H1 (cell line): ENCODE measurements at regions of chr9 and their contacts with region 1.

Region 1: GRCh38 chr9:114662081-114662989 is 4.7 kb upstream of the TEX53 start:
- DNase-seq: peak in 1 of 2 experiments; percentile 89
- H3K4me3 ChIP-seq: no peak overlapping the region
- H3K27ac ChIP-seq: no peak overlapping the region
- H3K4me1 ChIP-seq: peaks cover 0 to 11% (median 6%) of the 10 kb centered on the region in 4 experiments; a peak in 4 of 7 replicates
- H3K27me3 ChIP-seq: no peaks in the 10 kb centered on the region
- CTCF ChIP-seq: peak; percentile 70 to 90 (median 90)
- EP300 ChIP-seq: no peak
- POLR2A ChIP-seq: no peak
- RAD21 ChIP-seq: peak; percentile 81 to 87

Region 2: GRCh38 chr9:114674798-114675540 is 12.6 kb after region 1 on chr9:
- CTCF ChIA-PET with region 1: interaction called, 35 read pairs
- POLR2A ChIA-PET with region 1: no interaction called
- DNase-seq: no peak
- H3K4me3 ChIP-seq: no peak overlapping the region
- H3K27ac ChIP-seq: no peak overlapping the region
- H3K4me1 ChIP-seq: no peaks in the 10 kb centered on the region
- H3K27me3 ChIP-seq: no peaks in the 10 kb centered on the region; a peak in 2 of 7 replicates
- CTCF ChIP-seq: 0 out of 4 replicates have a peak, but pooled peaks of 1 of the 3 experiments have one; percentile 12
- EP300 ChIP-seq: no peak
- POLR2A ChIP-seq: no peak
- RAD21 ChIP-seq: no peak